Activated CD8-positive, alpha-beta T cell treated with anti-CD3 and anti-CD28 coated beads for 36 hours (primary cell): ENCODE measurements at regions of chr14 and their contacts with region 1.

Region 1: GRCh38 chr14:106347890-106348755 is 821.7 kb downstream of the TMEM121 start:
- DNase-seq: no peak
- ATAC-seq: no peak
- H3K4me3 Mint-ChIP-seq: no peak overlapping the region
- H3K27ac Mint-ChIP-seq: no peak overlapping the region
- H3K4me1 Mint-ChIP-seq: peaks cover 4% of the 10 kb centered on the region
- H3K27me3 Mint-ChIP-seq: peaks cover 3% of the 10 kb centered on the region
- CTCF ChIP-seq: no peak

Region 2: DNA sequence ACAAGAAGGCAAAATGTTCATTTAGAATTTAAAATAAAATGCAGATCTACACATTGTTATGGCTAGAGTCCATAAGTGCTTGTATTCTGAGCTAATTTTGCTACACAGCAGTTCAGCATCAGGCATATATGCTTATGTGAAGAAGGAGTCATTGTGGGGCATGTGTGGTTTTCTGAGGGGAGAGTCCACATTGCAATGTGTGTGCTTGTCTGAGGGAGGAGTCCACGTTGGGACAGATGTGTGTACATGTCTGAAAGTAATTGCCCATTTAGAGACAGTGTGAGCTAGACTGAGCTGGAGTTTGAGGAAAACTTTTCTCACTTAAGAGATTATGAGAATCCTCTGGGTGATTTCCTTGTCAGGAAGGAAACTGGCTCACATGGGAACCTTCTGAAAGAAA is 53.8 kb before region 1 on chr14:
- CTCF ChIA-PET with region 1: no interaction called
- POLR2A ChIA-PET with region 1: no interaction called
- intact Hi-C with region 1: no loop called
- DNase-seq: no peak
- ATAC-seq: no peak
- H3K4me3 Mint-ChIP-seq: no peak overlapping the region
- H3K27ac Mint-ChIP-seq: no peak overlapping the region
- H3K4me1 Mint-ChIP-seq: no peaks in the 10 kb centered on the region
- H3K27me3 Mint-ChIP-seq: peaks cover 4% of the 10 kb centered on the region
- CTCF ChIP-seq: no peak

Region 3: GRCh38 chr14:106327234-106327633 is 20.9 kb before region 1 on chr14:
- CTCF ChIA-PET with region 1: interaction called, 8 read pairs
- POLR2A ChIA-PET with region 1: no interaction called
- intact Hi-C with region 1: loop called (anchors 1 kb)
- DNase-seq: no peak
- ATAC-seq: no peak
- H3K4me3 Mint-ChIP-seq: no peak overlapping the region
- H3K27ac Mint-ChIP-seq: no peak overlapping the region
- H3K4me1 Mint-ChIP-seq: no peaks in the 10 kb centered on the region
- H3K27me3 Mint-ChIP-seq: peaks cover 11% of the 10 kb centered on the region
- CTCF ChIP-seq: no peak